Activated CD8-positive, alpha-beta memory T cell treated with anti-CD3 and anti-CD28 coated beads, Interleukin-2, amount 10 ng/mL, durations not matched to agents 7 days and 5 days (primary cell): ENCODE measurements at regions of chr3 and their contacts with region 1.

Region 1: DNA sequence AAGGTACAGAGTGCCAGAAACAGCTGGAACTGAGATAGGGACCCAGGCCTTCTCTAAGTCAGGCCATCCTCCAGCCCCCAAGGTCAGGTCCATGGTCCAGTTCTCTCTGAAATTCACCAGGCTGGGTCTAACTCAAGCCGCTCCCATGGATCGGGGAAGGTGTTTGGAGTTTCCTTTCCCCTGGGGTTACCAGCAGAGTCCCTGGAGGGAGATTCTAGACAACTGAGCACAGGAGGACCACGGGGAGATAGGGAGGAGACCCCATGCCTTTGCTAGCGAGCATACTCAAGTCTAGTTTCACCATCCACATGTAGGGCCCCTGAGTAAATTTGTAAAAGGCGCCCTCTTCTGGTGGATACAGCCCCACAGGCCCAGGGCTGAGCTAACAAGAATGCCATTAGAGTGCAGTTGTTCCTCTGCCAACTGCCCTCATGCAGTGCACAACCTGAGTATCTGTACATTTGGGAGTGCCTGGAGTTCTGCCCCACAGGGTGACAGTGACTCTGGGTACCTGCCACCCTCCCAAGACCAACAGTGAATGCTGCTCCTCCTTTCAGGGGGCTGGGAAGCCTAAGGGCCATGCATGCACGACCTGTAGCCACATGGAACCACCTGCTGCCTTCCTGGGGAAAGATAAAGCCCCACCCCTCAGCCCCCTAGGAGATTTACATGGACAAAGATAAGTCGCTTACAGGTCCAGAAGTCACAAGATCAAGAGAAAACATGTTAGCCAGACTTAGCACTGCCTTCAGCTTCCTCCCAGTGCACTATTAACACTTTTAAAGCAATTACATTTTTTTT is 89.0 kb downstream of the IQSEC1 start:
- DNase-seq: peak; percentile 80
- ATAC-seq: peak; percentile 79
- H3K4me3 Mint-ChIP-seq: no peak overlapping the region
- H3K27ac Mint-ChIP-seq: no peak overlapping the region
- H3K4me1 Mint-ChIP-seq: peaks cover 50% of the 10 kb centered on the region
- H3K27me3 Mint-ChIP-seq: no peaks in the 10 kb centered on the region

Region 2: GRCh38 chr3:12541631-12542030 is 442.6 kb before region 1 on chr3:
- CTCF ChIA-PET with region 1: no interaction called
- DNase-seq: no peak
- ATAC-seq: no peak
- H3K4me3 Mint-ChIP-seq: no peak overlapping the region
- H3K27ac Mint-ChIP-seq: no peak overlapping the region
- H3K4me1 Mint-ChIP-seq: peaks cover 5% of the 10 kb centered on the region
- H3K27me3 Mint-ChIP-seq: no peaks in the 10 kb centered on the region

Region 3: DNA sequence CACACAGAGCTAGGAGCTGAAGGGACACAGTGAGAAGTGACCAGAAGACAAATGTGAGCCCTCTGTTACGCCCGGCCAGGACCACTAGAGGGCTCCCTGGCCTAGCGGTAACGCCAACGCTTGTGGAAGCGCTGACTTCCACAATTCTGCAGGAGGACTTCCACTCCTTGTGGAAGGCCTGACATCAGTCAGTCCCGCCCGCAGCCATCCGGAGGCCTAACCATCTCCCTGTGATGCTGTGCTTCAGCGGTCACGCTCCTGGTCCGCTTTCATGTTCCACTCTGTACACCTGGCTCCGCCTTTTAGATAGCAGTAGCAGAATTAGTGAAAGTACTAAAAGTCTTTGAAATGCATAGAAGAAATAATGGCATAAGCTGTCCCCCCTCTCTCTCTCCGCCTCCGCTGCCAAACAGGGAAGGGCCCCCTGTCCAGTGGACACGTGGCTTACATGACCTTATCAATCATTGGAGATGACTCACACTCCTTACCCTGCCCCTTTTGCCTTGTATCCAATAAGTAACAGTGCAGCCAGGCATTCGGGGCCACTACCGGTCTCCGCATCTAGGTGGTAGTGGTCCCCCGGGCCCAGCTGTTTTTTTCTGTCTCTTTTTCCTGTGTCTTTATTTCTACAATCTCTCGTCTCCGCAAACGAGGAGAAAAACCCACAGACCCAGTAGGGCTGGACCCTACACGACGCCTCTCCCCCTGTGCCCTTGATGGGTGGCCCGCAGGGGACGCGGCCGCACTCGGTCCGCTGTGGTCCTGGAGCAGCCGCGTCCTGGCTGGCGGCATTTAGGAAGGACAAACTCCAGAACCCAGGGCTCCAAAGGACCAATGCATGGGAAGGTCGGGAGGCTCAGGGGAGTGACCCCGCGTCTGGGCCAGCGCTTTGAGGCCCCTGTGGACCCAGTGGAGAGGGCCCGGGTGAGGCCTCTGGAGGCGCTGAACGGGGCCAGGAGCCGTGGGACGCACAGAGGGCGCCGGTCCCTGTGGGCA is 115.9 kb before region 1 on chr3:
- CTCF ChIA-PET with region 1: interaction called, 18 read pairs
- DNase-seq: peak; percentile 73
- ATAC-seq: peak; percentile 72
- H3K4me3 Mint-ChIP-seq: peak overlapping the region; percentile 62
- H3K27ac Mint-ChIP-seq: no peak overlapping the region
- H3K4me1 Mint-ChIP-seq: peaks cover 21% of the 10 kb centered on the region
- H3K27me3 Mint-ChIP-seq: peaks cover 18% of the 10 kb centered on the region

Region 4: GRCh38 chr3:12948891-12949711 is 35.1 kb before region 1 on chr3:
- CTCF ChIA-PET with region 1: interaction called, 16 read pairs
- DNase-seq: peak; percentile 84
- ATAC-seq: peak; percentile 90
- H3K4me3 Mint-ChIP-seq: no peak overlapping the region
- H3K27ac Mint-ChIP-seq: peak overlapping the region; percentile 52
- H3K4me1 Mint-ChIP-seq: peaks cover 55% of the 10 kb centered on the region
- H3K27me3 Mint-ChIP-seq: no peaks in the 10 kb centered on the region

Region 5: GRCh38 chr3:12994607-12995388 is 10.6 kb after region 1 on chr3:
- CTCF ChIA-PET with region 1: interaction called, 54 read pairs
- DNase-seq: peak; percentile 88
- ATAC-seq: peak; percentile 91
- H3K4me3 Mint-ChIP-seq: peak overlapping the region; percentile 92
- H3K27ac Mint-ChIP-seq: peak overlapping the region; percentile 73
- H3K4me1 Mint-ChIP-seq: peaks cover 22% of the 10 kb centered on the region
- H3K27me3 Mint-ChIP-seq: no peaks in the 10 kb centered on the region

Region 6: DNA sequence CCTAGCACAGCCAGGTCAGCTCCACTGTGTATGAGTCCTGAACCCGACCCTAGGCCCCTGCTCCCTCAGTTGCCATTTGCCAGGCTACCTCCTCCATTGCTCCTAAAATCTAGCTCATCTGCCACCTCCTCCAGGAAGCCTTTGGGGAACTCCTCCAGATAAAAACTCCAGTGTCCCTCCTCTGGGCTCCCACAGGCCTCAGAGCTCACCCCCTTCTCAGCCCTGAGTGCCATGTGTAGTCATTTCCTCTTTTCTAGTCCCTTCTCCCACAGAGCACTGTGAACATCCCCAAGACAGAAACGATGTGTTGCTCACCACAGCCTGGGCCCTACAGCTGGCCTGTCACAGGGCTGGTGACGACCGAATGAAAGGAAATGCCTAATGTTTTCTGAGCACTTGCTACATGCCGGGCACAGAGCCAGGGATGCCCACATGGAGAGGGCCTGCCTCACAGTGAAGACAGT is 28.0 kb after region 1 on chr3:
- CTCF ChIA-PET with region 1: interaction called, 13 read pairs
- DNase-seq: peak; percentile 83
- ATAC-seq: peak; percentile 22
- H3K4me3 Mint-ChIP-seq: peak overlapping the region; percentile 66
- H3K27ac Mint-ChIP-seq: peak overlapping the region; percentile 100
- H3K4me1 Mint-ChIP-seq: peaks cover 80% of the 10 kb centered on the region
- H3K27me3 Mint-ChIP-seq: no peaks in the 10 kb centered on the region

Region 7: GRCh38 chr3:13098192-13098988 is 114.2 kb after region 1 on chr3:
- CTCF ChIA-PET with region 1: no interaction called
- DNase-seq: no peak
- ATAC-seq: no peak
- H3K4me3 Mint-ChIP-seq: no peak overlapping the region
- H3K27ac Mint-ChIP-seq: no peak overlapping the region
- H3K4me1 Mint-ChIP-seq: peaks cover 10% of the 10 kb centered on the region
- H3K27me3 Mint-ChIP-seq: peaks cover 22% of the 10 kb centered on the region